Mammary epithelial cell (primary cell): ENCODE measurements at regions of chr20 and their contacts with region 1.

Region 1: DNA sequence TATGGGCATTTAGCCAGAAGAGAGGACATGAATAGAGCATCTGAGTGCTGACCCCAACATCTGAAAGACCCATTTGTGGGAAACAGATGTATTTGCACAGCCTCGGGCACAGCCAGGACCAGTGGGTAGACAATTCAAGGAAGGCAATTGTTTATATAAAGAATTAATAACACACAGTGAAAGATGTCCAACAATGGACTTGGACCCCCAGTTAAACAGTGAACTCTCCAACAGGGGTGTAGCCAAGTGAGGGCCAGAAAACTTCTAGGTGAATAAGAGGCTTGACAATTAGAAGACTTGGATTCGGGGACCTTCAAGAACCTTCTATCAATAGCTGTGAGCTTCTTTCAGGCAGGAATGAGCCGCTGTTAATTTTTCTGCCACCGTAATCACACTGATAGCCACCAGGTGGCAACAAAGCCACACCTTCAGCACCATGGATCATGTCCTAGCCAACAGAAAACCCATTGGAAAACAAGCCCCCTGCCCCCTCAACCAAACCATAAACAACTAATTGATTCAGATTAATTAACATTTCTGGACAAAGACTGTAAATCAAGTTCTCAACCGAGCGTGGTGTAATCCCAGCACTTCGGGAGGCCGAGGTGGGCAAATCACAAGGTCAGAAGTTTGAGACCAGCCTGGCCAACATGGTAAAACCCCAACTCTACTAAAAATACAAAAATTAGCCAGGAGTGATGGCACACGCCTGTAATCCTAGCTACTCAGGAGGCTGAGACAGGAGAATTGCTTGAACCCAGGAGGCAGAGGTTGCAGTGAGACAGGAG is 8.8 kb upstream of the SRSF6 start:
- DNase-seq: peak; percentile 26
- H3K4me3 ChIP-seq: no peak overlapping the region
- H3K27ac ChIP-seq: no peak overlapping the region
- H3K4me1 ChIP-seq: no peaks in the 10 kb centered on the region
- H3K27me3 ChIP-seq: no peaks in the 10 kb centered on the region
- CTCF ChIP-seq: peak; percentile 79 to 88

Region 2: DNA sequence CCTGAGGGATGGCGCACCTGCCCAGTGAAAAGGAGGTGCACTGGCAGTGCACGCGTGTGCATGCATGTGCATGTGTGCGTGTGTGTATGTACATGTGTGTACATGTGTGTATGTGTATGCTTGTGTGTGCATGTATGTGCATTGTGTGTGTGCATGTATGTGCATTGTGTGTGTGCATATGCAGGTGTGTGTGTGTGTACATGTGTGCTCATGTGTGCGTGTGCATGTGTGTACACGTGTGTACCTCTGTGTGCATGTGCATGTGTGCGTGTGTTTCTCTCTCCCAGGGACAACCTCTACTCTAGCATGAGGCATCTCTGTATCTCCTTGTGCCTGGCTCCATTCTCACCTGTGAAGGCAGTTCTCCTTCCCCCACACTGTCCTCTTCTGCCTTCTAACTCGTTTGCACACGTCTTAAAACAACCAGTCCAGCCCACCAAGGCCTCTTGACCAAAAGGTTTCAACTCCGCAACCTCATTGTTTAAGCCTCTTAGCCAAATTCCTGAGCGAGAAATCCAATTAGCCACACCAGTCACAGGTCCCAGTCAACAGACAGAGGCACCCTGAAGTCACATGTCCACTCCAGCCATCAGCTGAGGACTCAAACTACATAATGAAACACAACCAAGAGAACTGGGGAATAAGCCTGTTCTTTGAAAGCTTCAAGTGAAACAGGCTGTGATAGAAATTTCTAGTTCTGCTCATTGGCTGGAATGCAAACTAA is 155.7 kb before region 1 on chr20:
- CTCF ChIA-PET with region 1: no interaction called
- dilution Hi-C with region 1: no loop called
- in situ Hi-C with region 1: no loop called
- intact Hi-C with region 1: no loop called
- DNase-seq: no peak
- H3K4me3 ChIP-seq: no peak overlapping the region
- H3K27ac ChIP-seq: no peak overlapping the region
- H3K4me1 ChIP-seq: no peaks in the 10 kb centered on the region
- H3K27me3 ChIP-seq: no peaks in the 10 kb centered on the region
- CTCF ChIP-seq: no peak

Region 3: DNA sequence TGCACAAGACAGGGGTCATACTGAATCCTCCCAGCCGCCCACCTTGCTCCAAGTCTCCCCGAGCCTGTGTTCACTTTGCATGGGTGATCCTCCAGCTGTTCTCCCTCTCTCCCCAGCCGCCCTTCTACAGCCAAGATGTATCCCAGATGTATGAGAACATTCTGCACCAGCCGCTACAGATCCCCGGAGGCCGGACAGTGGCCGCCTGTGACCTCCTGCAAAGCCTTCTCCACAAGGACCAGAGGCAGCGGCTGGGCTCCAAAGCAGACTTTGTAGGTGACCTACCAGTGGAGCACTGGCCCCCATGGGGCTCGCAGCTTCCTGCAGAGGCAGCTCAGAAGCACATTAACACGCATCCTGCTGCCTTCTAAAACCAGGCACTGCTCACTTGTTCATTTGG is 127.2 kb after region 1 on chr20:
- CTCF ChIA-PET with region 1: interaction called, 13 read pairs
- dilution Hi-C with region 1: no loop called
- in situ Hi-C with region 1: no loop called
- intact Hi-C with region 1: no loop called
- DNase-seq: no peak
- H3K4me3 ChIP-seq: no peak overlapping the region
- H3K27ac ChIP-seq: no peak overlapping the region
- H3K4me1 ChIP-seq: no peaks in the 10 kb centered on the region
- H3K27me3 ChIP-seq: no peaks in the 10 kb centered on the region
- CTCF ChIP-seq: no peak

Region 4: GRCh38 chr20:43691928-43692524 is 243.1 kb after region 1 on chr20:
- CTCF ChIA-PET with region 1: no interaction called
- dilution Hi-C with region 1: no loop called
- in situ Hi-C with region 1: no loop called
- intact Hi-C with region 1: loop called (anchors 1 kb)
- DNase-seq: peak; percentile 27
- H3K4me3 ChIP-seq: no peak overlapping the region
- H3K27ac ChIP-seq: no peak overlapping the region
- H3K4me1 ChIP-seq: no peaks in the 10 kb centered on the region
- H3K27me3 ChIP-seq: no peaks in the 10 kb centered on the region
- CTCF ChIP-seq: peak; percentile 56 to 74

Region 5: GRCh38 chr20:43749734-43750294 is 300.9 kb after region 1 on chr20:
- CTCF ChIA-PET with region 1: no interaction called
- dilution Hi-C with region 1: no loop called
- in situ Hi-C with region 1: no loop called
- intact Hi-C with region 1: loop called (anchors 1 kb)
- DNase-seq: peak; percentile 57
- H3K4me3 ChIP-seq: no peak overlapping the region
- H3K27ac ChIP-seq: no peak overlapping the region
- H3K4me1 ChIP-seq: peaks cover 22% of the 10 kb centered on the region
- H3K27me3 ChIP-seq: no peaks in the 10 kb centered on the region
- CTCF ChIP-seq: peak; percentile 85 to 99

Region 6: GRCh38 chr20:44080646-44081267 is 631.8 kb after region 1 on chr20:
- CTCF ChIA-PET with region 1: interaction called, 3 read pairs
- dilution Hi-C with region 1: no loop called
- in situ Hi-C with region 1: loop called (anchors 10 kb)
- intact Hi-C with region 1: loop called (anchors 1 kb)
- DNase-seq: peak; percentile 57
- H3K4me3 ChIP-seq: no peak overlapping the region
- H3K27ac ChIP-seq: no peak overlapping the region
- H3K4me1 ChIP-seq: peaks cover 8% of the 10 kb centered on the region
- H3K27me3 ChIP-seq: no peaks in the 10 kb centered on the region
- CTCF ChIP-seq: peak; percentile 92 to 100

Region 7: DNA sequence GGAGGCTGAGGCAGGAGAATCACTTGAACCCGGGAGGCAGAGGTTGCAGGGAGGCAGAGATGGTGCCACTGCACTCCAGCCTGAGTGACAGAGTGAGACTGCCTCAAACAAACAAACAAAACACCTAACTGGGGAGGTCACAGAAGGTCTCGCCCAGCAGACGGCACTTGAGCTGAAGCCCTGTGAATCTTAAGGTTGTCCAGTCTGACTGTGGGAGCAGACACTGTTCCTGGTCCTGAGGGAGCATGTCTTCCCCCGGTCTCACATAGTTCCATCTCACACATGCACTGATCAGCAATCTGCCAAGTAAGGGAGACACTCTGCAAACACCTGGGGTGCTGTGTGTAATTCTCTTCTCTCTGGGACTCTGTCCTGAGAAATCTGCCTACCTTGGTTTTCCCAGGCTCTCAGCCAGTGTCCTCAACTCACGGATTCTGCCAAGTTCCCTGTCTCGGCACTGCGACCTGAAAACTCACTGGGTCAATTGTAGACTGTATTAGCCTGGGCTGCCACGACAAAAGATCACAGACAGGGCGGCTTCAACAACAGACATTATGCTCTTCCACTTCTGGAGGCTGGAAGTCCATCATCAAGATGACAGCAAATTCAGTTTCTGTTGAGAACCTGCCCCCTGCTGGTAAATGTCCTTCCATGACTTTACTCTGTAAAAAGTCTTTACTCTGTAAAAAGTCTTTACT is 643.8 kb after region 1 on chr20:
- CTCF ChIA-PET with region 1: interaction called, 3 read pairs
- dilution Hi-C with region 1: no loop called
- in situ Hi-C with region 1: loop called (anchors 10 kb)
- intact Hi-C with region 1: loop called (anchors 1 kb)
- DNase-seq: peak; percentile 38
- H3K4me3 ChIP-seq: no peak overlapping the region
- H3K27ac ChIP-seq: no peak overlapping the region
- H3K4me1 ChIP-seq: peaks cover 21% of the 10 kb centered on the region
- H3K27me3 ChIP-seq: no peaks in the 10 kb centered on the region
- CTCF ChIP-seq: peak; percentile 52 to 55